Activated T-helper 2 cell treated with anti-CD3 and anti-CD28 coated beads, Interferon-gamma antibody, Interleukin-2, Interleukin-4, amounts not matched to agents 10 μg/mL and 5 μg/mL and 100 μg/mL, durations not matched to agents 14 hours and 24 hours and 36 hours (primary cell): ENCODE measurements at regions of chr12 and their contacts with region 1.

Region 1: DNA sequence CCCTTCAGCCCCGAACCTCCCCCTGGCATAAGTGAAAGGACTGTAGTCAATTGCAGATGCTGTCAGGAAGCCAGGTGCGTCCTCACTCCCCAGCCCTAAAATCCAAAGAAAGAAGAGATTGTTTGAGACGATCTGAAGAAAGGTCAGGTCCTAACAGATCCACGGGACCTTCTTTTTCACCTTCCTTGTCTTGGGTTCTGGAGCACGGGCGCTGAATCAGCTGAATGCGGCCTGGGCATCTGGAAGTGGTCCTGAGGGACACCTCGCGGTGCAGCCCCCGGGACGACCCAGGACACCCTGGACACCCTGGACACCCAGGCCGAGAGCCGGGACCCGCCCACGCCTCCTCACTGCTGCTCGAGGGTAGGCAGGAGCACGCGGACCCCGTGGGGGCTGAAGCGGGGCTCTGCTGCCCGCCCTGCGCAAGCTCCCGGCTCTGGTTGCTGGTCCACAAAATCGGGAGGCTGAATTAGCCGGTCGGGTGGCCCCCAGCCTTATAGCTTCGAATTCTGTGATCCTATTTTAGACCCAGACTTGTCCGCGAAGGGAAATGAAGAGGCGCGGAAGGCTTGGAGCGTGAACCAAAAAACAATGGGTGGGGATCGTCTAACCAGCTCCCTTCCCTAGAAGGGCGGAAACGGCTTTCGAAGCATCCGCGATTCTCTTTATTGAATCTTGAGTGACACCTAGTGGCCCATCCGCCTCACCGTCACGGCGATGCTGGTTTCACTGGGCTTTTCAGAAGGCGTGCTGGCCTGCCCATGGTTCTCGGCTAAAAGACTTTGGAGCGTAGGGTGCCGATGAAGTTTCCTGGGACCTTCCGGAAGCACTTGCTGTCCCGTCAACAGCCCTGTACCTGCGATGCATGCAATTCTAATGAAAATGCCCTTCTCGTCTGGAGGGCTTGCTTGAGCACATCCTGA is 46.4 kb upstream of the PLXNC1 start:
- DNase-seq: peak; percentile 81
- H3K4me3 Mint-ChIP-seq: peak overlapping the region; percentile 77
- H3K27ac Mint-ChIP-seq: peak overlapping the region; percentile 62
- H3K4me1 Mint-ChIP-seq: peaks cover 35% of the 10 kb centered on the region
- H3K27me3 Mint-ChIP-seq: peaks cover 2% of the 10 kb centered on the region

Region 2: DNA sequence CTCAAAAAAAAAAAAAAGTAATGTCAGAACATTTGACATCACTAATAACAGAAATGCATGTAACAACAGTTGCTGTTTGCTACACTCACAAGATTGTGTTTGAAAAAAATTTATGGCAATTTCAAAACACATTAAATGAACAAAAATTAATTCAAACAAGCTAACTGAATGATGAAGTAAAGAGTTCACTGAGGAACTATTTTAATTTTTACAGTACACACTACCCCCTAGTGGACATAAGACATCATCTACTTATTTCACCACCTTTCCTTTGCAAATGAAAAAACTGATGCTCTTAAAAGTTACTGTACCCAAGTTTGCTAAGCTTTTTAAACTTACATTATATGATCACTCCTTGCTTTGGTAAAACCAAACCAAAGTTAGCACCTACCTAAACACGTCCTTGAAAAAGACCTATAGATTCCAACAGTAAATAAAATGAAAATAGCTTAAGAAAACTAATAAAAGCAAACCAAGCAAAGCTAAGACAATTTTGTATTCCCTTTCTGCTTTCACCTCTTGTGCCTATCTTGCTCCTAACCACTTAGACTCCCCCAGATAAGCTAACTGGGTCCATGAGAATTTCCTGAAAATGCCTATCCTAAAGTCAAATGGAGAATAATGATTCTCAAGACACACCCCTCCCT is 682.5 kb before region 1 on chr12:
- intact Hi-C with region 1: loop called (anchors 5 kb)
- DNase-seq: no peak
- H3K4me3 Mint-ChIP-seq: no peak overlapping the region
- H3K27ac Mint-ChIP-seq: no peak overlapping the region
- H3K4me1 Mint-ChIP-seq: peaks cover 69% of the 10 kb centered on the region
- H3K27me3 Mint-ChIP-seq: no peaks in the 10 kb centered on the region

Region 3: DNA sequence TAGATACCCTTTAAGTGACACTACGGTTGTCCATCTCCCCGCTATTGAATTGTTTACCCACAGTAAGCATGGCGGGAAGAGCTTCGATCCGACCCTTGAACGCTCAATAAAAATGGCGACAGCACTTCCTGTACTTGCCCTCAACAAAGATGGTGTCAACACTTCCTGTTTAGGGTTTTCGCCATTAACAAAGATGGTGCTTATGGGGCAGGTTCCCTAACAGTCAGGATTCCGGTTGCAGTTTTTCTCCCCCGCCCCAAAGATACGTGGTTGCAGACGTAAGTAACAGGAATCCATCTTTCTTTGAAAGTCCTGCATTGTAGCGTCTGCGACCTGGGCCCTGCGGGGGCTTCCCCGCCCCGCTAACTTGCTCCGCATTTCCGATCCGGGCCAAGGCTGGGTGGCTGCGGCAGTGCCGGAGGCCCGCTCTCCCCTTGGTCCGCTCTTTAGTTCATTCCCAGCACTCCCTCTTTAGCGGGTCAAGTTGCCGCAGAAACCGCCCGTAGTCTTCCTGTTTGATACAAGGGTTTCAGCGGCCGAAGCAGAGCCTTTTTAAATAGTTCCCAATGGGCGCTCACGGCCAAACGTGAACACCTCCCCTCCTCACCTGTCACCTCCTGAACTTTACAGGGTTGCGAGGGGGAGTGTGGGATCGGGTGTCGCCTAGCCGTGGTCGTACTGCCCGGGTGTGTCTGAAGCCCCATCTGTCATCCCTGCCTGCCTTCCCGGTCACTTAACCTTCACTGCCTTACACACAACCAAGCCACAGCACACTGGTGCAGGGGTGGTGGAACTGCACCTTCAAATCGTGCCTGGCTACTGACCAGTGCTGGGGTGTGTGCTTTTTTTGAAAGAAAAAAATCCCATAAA is 424.6 kb before region 1 on chr12 and contains the start of gene CRADD:
- intact Hi-C with region 1: loop called (anchors 1 kb)
- DNase-seq: peak; percentile 85
- H3K4me3 Mint-ChIP-seq: peak within 1 kb of the TSS; percentile 94
- H3K27ac Mint-ChIP-seq: peak within 1 kb of the TSS; percentile 99
- H3K4me1 Mint-ChIP-seq: peaks cover 30% of the 10 kb centered on the region
- H3K27me3 Mint-ChIP-seq: peaks cover 9% of the 10 kb centered on the region
- total RNA-seq, gene CRADD: 10.2 and 10.7 TPM in 2 replicates

Region 4: DNA sequence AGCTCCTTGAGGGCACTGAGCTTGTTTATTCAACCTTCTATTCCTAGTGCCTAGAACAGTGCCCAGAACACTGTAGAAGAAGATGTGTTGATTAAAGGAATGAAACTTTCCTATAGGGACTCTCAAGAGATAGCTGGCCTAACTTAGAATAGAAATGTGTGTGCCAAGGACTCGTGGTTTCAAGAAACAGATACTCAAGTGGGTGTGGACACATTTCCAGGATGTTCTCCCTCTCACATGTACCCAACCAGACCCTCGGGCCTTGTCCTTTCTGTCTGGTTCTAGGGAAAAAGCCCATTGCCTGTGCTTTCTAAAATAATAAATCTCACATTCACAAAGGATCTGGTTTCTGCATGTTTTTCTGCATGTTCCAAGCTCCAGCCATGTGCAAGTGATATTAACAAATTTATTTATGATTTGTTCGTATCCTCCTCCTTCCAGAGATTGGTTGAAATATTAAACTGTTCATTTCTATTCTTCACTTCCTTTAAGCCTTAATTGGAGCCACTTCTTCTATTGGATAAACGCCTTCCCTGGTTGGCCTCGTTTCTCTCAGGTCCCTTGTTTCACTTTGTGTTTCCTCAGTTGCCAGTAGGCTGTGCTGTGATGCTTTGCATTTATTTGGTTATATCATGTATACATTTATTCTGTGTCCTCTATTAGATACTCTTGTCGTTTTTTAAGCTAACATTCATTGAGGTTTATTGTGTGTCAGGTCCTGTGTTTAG is 335.0 kb before region 1 on chr12:
- intact Hi-C with region 1: loop called (anchors 1 kb)
- DNase-seq: peak; percentile 28
- H3K4me3 Mint-ChIP-seq: no peak overlapping the region
- H3K27ac Mint-ChIP-seq: no peak overlapping the region
- H3K4me1 Mint-ChIP-seq: peaks cover 32% of the 10 kb centered on the region
- H3K27me3 Mint-ChIP-seq: peaks cover 7% of the 10 kb centered on the region

Region 5: DNA sequence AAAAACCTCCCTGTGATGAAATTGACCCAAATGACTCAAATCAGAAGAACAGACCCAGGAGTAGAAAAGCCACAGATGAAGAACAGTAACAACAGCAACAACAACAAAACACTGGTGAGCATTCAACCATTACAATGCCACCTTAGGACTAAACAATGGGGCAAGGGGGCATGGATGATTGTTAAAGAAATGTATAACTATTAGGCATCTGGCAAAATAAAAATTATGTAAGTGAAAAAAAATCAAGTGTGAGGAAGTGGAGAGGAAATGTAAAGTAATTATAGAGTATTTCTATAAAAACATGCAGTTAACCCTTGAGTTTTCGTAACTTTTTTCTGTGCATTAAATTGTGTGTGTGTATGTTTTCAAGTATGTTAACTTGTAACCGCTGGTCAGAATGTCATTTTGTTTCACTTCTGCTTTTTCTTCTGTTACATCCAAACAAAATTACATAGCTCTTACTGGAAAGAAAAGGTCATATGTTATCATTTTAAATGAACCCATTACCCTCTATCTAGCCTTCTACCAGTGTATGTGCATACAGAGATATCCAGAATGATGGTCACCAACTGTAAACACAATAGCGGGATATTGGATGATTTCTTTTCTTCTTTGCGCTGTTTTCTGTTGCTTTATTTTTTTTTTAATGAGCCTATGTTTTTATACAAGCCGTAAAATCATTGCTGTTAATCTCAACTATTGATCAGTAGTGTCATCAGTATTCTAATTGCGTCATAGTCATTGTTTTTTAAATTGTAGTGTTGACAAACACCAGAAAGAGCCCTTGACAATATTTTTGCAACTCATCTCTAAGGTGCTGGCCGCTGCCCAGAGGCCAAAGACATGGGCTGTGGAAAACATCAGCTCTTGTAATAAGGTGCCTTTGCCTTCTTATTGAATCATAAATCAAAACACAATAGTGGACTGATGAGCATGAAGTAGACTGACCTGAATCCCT is 254.2 kb before region 1 on chr12:
- intact Hi-C with region 1: loop called (anchors 2 kb)
- DNase-seq: no peak
- H3K4me3 Mint-ChIP-seq: peak overlapping the region; percentile 40
- H3K27ac Mint-ChIP-seq: peak overlapping the region; percentile 81
- H3K4me1 Mint-ChIP-seq: peaks cover 54% of the 10 kb centered on the region
- H3K27me3 Mint-ChIP-seq: no peaks in the 10 kb centered on the region

Region 6: GRCh38 chr12:93857991-93858447 is 244.0 kb before region 1 on chr12:
- intact Hi-C with region 1: no loop called
- DNase-seq: no peak
- H3K4me3 Mint-ChIP-seq: no peak overlapping the region
- H3K27ac Mint-ChIP-seq: no peak overlapping the region
- H3K4me1 Mint-ChIP-seq: peaks cover 44% of the 10 kb centered on the region
- H3K27me3 Mint-ChIP-seq: no peaks in the 10 kb centered on the region

Region 7: DNA sequence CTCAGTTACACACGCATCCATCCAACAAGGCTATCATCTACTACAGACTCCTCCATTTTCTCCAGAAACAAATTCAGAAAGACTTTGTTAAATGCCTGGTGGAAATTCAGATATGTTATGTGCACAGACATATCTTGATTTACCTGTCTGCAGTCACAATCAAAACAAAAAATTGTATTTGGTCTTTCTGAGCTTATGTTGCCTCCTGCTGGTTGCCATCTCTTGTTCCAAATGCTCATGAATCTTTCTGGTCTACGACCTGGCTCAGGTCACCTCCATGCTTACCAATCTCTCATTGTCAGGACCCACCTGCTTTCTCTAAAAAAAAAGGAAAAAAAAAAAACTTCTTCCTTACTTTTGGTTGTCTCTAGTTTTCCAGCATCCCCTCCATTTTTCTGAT is 122.8 kb before region 1 on chr12:
- intact Hi-C with region 1: loop called (anchors 2 kb)
- DNase-seq: peak; percentile 13
- H3K4me3 Mint-ChIP-seq: no peak overlapping the region
- H3K27ac Mint-ChIP-seq: no peak overlapping the region
- H3K4me1 Mint-ChIP-seq: peaks cover 34% of the 10 kb centered on the region
- H3K27me3 Mint-ChIP-seq: peaks cover 8% of the 10 kb centered on the region

Region 8: DNA sequence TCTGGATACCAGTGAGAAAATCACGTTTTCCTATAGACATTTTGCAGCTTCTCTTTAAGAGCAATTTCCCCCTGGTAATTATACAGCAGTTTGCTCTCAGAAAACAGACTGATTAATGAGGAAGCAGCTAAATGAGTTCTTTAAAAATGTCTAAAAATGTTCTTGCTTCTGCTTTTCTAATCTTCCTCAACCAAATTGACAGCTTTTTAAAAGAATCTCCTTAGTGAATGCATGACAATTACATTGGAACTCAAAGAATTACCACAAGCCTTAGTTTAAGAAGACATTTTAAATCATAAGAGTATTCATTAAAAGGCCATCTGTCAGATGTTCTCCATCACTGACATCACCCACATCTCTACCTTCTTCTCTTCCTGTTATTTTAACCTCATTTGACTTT is 89.4 kb before region 1 on chr12:
- intact Hi-C with region 1: no loop called
- DNase-seq: no peak
- H3K4me3 Mint-ChIP-seq: no peak overlapping the region
- H3K27ac Mint-ChIP-seq: no peak overlapping the region
- H3K4me1 Mint-ChIP-seq: peaks cover 11% of the 10 kb centered on the region
- H3K27me3 Mint-ChIP-seq: no peaks in the 10 kb centered on the region